Endothelial cell of umbilical vein (primary cell): ENCODE measurements at regions of chr17 and their contacts with region 1.

Region 1: GRCh38 chr17:78278139-78279127 is 47.0 kb downstream of the TMEM235 start:
- DNase-seq: no peak
- H3K4me3 ChIP-seq: no peak overlapping the region
- H3K27ac ChIP-seq: no peak overlapping the region
- H3K4me1 ChIP-seq: no peaks in the 10 kb centered on the region
- H3K27me3 ChIP-seq: no peaks in the 10 kb centered on the region
- CTCF ChIP-seq: no peak
- POLR2A ChIP-seq: no peak

Region 2: GRCh38 chr17:78019367-78019975 is 259.0 kb before region 1 on chr17:
- CTCF ChIA-PET with region 1: no interaction called
- POLR2A ChIA-PET with region 1: no interaction called
- dilution Hi-C with region 1: no loop called
- intact Hi-C with region 1: no loop called
- DNase-seq: peak; percentile 56
- H3K4me3 ChIP-seq: no peak overlapping the region
- H3K27ac ChIP-seq: no peak overlapping the region
- H3K4me1 ChIP-seq: no peaks in the 10 kb centered on the region
- H3K27me3 ChIP-seq: no peaks in the 10 kb centered on the region
- CTCF ChIP-seq: peak; percentile 19 to 28
- POLR2A ChIP-seq: no peak

Region 3: DNA sequence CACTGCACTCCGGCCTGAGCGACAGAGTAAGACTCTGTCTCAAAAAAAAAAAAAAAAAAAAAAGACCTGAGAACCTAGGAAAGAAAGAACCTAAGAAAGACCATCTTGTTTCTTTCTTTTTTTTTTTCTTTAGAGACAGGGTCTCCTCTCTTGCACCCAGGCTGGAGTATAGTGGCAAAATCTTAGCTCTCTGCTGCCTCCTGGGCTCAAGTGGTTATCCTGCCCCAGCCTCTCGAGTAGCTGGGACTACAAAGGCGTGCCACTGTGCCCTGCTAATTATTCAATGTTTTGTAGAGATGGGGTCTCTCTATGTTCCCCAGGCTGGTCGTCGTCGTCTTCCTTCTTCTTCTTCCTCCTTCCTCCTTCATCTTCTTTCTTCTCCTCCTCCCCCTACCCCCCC is 72.1 kb before region 1 on chr17:
- CTCF ChIA-PET with region 1: no interaction called
- POLR2A ChIA-PET with region 1: no interaction called
- dilution Hi-C with region 1: no loop called
- intact Hi-C with region 1: no loop called
- DNase-seq: no peak
- H3K4me3 ChIP-seq: no peak overlapping the region
- H3K27ac ChIP-seq: no peak overlapping the region
- H3K4me1 ChIP-seq: no peaks in the 10 kb centered on the region
- H3K27me3 ChIP-seq: no peaks in the 10 kb centered on the region
- CTCF ChIP-seq: no peak
- POLR2A ChIP-seq: no peak

Region 4: DNA sequence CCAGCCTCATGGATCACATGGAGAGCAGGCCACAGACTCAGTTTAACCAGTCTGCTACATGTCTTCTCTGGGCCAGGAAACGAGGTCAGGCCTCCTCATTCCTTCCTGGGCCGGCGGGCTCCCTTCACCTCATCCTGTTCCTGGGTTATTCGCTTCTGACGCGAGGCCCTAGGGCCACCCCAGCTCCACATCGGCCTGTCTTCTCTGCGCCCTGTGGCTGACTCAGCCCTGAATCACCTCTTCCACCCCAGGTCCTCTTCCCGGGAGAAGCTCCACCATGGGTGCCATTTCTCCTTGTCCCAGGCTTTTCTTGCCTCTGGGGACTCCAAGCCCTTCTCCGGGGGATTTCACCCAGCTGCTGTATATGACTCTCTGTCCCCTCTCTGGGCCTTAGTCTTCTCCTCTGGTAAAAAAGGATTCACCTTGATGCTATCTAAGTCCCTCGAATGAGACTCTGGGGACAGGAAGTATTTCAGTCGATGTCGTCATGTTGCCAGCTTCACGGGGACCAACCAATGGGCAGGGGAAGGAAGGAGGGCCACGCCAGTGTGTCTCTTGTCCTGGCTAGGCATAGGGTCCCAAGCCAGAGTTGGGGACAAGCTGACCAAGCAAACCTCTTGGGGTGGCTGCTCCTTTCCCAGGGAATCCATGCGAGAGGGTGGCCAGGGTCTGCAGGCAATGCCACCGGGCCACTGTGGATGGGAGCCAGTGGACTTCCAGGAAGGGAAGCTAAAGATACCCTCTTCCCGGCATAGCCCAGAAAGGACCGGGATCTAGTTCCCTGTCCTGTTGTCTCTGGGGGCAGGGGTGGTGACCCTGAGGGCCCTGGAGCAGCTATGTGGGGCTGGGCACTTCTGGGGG is 22.8 kb after region 1 on chr17:
- CTCF ChIA-PET with region 1: no interaction called
- POLR2A ChIA-PET with region 1: no interaction called
- dilution Hi-C with region 1: no loop called
- intact Hi-C with region 1: loop called (anchors 1 kb)
- DNase-seq: no peak
- H3K4me3 ChIP-seq: no peak overlapping the region
- H3K27ac ChIP-seq: no peak overlapping the region
- H3K4me1 ChIP-seq: no peaks in the 10 kb centered on the region
- H3K27me3 ChIP-seq: no peaks in the 10 kb centered on the region
- CTCF ChIP-seq: no peak
- POLR2A ChIP-seq: no peak

Region 5: GRCh38 chr17:78645421-78646295 is 367.2 kb after region 1 on chr17:
- CTCF ChIA-PET with region 1: no interaction called
- POLR2A ChIA-PET with region 1: no interaction called
- dilution Hi-C with region 1: no loop called
- intact Hi-C with region 1: no loop called
- DNase-seq: peak; percentile 10
- H3K4me3 ChIP-seq: no peak overlapping the region
- H3K27ac ChIP-seq: no peak overlapping the region
- H3K4me1 ChIP-seq: peaks cover 8% of the 10 kb centered on the region
- H3K27me3 ChIP-seq: peaks cover 2 to 3% of the 10 kb centered on the region in 2 experiments
- CTCF ChIP-seq: no peak
- POLR2A ChIP-seq: no peak